WTC11 (cell line): ENCODE measurements at regions of chr4 and their contacts with region 1.

Region 1: GRCh38 chr4:6327041-6327917 is 57.6 kb downstream of the WFS1 start:
- DNase-seq: peak; percentile 89
- ATAC-seq: peak; percentile 79
- H3K4me3 Mint-ChIP-seq: no peak overlapping the region
- H3K27ac Mint-ChIP-seq: no peak overlapping the region
- H3K4me1 Mint-ChIP-seq: 0 out of 2 replicates have a peak, but pooled peaks cover 3% of the 10 kb centered on the region
- H3K27me3 Mint-ChIP-seq: no peaks in the 10 kb centered on the region
- CTCF ChIP-seq: peak; percentile 95

Region 2: DNA sequence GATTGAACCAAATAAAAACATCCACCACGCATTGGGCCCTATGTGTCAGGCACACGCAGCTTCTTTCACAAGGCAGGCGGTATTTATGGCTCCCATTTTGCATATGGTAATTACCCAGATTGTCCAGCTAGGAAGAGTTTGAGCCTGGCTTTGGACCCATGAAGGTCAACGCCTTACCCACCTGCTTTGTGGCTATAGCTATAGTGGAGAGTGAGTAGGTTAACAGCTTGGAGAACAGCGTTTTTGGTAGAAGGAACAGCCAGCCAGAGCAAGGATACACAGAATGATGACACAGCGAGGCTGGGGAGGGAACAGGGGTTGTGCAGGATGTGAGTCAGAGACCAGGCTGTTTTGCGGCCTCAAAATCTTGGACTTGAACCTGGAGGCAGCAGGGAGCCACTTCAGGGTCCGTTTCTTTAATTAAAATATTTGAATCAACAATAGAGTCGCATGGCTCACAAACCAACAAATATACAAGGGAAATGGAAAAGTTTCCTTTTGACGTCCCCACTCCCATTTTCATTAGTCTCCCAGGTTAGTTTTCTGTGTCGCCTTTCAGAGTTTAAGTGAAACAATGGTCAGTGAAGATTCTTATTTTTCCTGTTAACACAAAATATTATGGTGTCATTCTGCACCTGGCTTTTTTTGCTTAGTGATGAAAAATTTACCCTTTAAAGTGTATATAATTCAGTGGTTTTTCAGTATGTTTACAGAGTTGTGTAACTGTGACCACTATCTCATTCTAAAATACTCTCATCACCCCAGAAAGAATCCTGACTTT is 1667.2 kb before region 1 on chr4:
- CTCF ChIA-PET with region 1: no interaction called
- POLR2A ChIA-PET with region 1: no interaction called
- DNase-seq: no peak
- ATAC-seq: no peak
- H3K4me3 Mint-ChIP-seq: no peak overlapping the region
- H3K27ac Mint-ChIP-seq: no peak overlapping the region
- H3K4me1 Mint-ChIP-seq: peaks cover 21% of the 10 kb centered on the region
- H3K27me3 Mint-ChIP-seq: no peaks in the 10 kb centered on the region
- CTCF ChIP-seq: no peak

Region 3: GRCh38 chr4:5998333-5998936 is 328.8 kb before region 1 on chr4:
- CTCF ChIA-PET with region 1: interaction called, 34 read pairs
- POLR2A ChIA-PET with region 1: no interaction called
- DNase-seq: peak; percentile 76
- ATAC-seq: peak; percentile 86
- H3K4me3 Mint-ChIP-seq: no peak overlapping the region
- H3K27ac Mint-ChIP-seq: no peak overlapping the region
- H3K4me1 Mint-ChIP-seq: no peaks in the 10 kb centered on the region
- H3K27me3 Mint-ChIP-seq: no peaks in the 10 kb centered on the region
- CTCF ChIP-seq: peak; percentile 94

Region 4: GRCh38 chr4:6269616-6270511 is 57.4 kb before region 1 on chr4 and contains the start of gene WFS1:
- CTCF ChIA-PET with region 1: interaction called, 713 read pairs
- POLR2A ChIA-PET with region 1: no interaction called
- DNase-seq: peak; percentile 99
- ATAC-seq: peak; percentile 99
- H3K4me3 Mint-ChIP-seq: peak within 1 kb of the TSS; percentile 81
- H3K27ac Mint-ChIP-seq: no peak within 1 kb of the TSS
- H3K4me1 Mint-ChIP-seq: peaks cover 54% of the 10 kb centered on the region
- H3K27me3 Mint-ChIP-seq: peaks cover 8% of the 10 kb centered on the region
- CTCF ChIP-seq: no peak
- total RNA-seq, gene WFS1: 33.0 to 35.8 TPM (median 34.7 TPM) in 3 replicates

Region 5: GRCh38 chr4:6349896-6350603 is 22.8 kb after region 1 on chr4:
- CTCF ChIA-PET with region 1: interaction called, 32 read pairs
- POLR2A ChIA-PET with region 1: no interaction called
- DNase-seq: no peak
- ATAC-seq: no peak
- H3K4me3 Mint-ChIP-seq: no peak overlapping the region
- H3K27ac Mint-ChIP-seq: no peak overlapping the region
- H3K4me1 Mint-ChIP-seq: 0 out of 2 replicates have a peak, but pooled peaks cover 3% of the 10 kb centered on the region
- H3K27me3 Mint-ChIP-seq: no peaks in the 10 kb centered on the region
- CTCF ChIP-seq: no peak

Region 6: DNA sequence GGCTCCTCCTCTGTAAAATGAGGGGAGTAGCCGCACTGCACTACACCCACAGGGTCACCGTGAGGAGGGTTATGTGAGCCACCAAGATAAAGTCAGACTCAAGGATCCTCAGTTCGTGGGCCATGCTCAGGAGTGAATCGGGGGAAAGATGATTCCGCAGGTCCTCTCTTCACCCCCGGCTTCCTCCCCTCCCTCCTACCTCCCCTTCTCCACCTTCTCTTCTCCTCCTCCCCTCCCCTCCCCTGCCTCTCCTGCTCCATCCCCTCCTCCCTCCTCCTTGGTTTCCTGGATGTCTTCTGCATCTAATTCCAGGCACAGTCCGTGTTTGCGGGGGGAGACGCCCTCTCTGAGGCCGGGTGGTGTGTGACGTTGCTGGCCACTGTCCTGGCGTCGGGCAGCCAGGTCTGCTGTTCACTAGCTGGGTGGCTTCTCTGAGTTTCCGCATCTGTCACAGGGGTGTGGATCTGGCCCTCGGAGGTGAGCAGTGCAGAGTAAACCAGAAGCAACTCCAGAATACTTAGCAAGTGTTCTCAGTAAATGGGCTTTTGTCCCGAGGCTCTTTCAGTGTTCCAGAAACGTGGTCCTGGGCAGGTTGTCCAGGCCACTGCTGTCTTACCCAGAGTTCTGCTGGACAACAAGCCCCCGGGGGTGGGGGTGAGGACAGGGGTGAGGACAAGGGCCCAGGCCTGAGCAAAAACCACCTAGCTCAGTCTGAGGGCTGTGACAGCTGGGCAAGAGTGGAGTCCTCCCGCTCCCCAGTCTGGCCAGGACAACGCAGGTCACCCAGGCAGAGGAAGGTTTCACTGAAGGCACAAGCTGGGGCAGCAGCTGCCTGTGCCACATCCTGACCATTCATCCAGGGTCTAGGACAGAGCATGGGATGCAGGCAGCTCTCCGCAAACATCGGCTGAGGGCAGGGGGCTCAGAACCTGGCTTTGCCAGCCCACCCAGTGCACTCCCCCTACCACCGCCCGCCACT is 52.8 kb after region 1 on chr4:
- CTCF ChIA-PET with region 1: interaction called, 17 read pairs
- POLR2A ChIA-PET with region 1: no interaction called
- DNase-seq: no peak
- ATAC-seq: peak; percentile 26
- H3K4me3 Mint-ChIP-seq: no peak overlapping the region
- H3K27ac Mint-ChIP-seq: no peak overlapping the region; the same call in 1 of the 2 replicates
- H3K4me1 Mint-ChIP-seq: peaks cover 14% of the 10 kb centered on the region
- H3K27me3 Mint-ChIP-seq: no peaks in the 10 kb centered on the region; the same call in 1 of the 2 replicates
- CTCF ChIP-seq: no peak

Region 7: GRCh38 chr4:6546681-6547447 is 219.6 kb after region 1 on chr4:
- CTCF ChIA-PET with region 1: interaction called, 42 read pairs
- POLR2A ChIA-PET with region 1: no interaction called
- DNase-seq: peak; percentile 59
- ATAC-seq: peak; percentile 76
- H3K4me3 Mint-ChIP-seq: no peak overlapping the region
- H3K27ac Mint-ChIP-seq: no peak overlapping the region
- H3K4me1 Mint-ChIP-seq: no peaks in the 10 kb centered on the region
- H3K27me3 Mint-ChIP-seq: peaks cover 11% of the 10 kb centered on the region
- CTCF ChIP-seq: peak; percentile 96